Naive thymus-derived CD4-positive, alpha-beta T cell (primary cell): ENCODE measurements at regions of chr17 and their contacts with region 1.

Region 1: GRCh38 chr17:66673668-66674315 is 161.1 kb upstream of the CACNG5 start:
- DNase-seq: peak in 8 of 9 donors; percentile 32 to 87 (median 78)
- ATAC-seq: peak; percentile 92
- H3K4me3 ChIP-seq: no peak overlapping the region
- H3K4me3 Mint-ChIP-seq: peak overlapping the region; percentile 39 to 84 (median 74)
- H3K27ac ChIP-seq: peak overlapping the region; percentile 59
- H3K27ac Mint-ChIP-seq: peak overlapping the region; percentile 88 to 98 (median 92)
- H3K4me1 ChIP-seq: peaks cover 18 to 45% of the 10 kb centered on the region in 2 donors
- H3K4me1 Mint-ChIP-seq: peaks cover 38 to 79% (median 64%) of the 10 kb centered on the region in 7 donors
- H3K27me3 ChIP-seq: no peaks in the 10 kb centered on the region
- H3K27me3 Mint-ChIP-seq: no peaks in the 10 kb centered on the region

Region 2: DNA sequence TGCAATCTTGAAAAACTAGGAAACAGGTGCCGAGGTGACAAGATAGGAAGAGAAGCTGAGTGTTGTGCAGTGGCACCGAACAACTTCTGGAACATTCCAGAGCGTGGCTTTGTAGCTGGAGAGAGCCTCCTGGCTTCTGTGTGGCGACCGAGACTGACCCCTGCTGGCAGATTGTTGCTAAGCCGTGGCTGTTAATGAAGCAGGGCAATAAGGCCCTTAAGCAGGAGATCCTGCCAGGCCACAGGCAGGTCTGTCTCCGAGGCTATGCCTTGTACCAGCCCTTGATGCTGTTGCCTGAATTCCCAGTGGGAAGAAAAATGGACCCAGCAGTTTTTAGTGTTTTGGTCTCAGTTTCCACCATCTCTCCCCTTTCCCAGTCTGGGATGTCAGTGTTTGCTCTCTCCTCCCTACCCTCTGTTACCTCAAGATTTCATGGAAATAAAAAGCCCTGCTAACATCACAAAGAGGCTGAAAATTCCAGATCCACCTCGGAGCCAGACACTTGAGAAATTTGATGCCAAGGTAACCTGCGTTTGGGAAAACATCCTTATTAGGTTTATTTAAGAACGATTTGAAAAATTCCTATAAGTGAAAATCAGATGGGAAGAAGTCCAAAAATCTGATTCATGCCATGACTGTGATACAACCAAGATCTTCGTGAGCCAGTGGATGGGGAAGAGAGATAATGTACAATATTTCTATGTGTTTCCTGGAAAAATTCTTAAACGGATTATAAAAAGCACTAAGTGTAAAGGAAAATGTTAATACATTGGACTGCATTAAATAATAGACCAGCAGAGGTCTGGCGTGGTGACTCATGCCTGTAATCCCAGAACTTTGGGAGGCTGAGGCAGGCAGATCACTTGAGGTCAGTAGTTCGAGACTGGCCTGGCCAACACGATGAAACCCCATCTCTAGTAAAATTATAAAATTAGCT is 106.3 kb before region 1 on chr17:
- CTCF ChIA-PET with region 1: no interaction called
- POLR2A ChIA-PET with region 1: no interaction called
- intact Hi-C with region 1: loop called in 1 of 2 experiments (anchors 5 kb)
- DNase-seq: peak; percentile 30 to 76 (median 65)
- ATAC-seq: peak; percentile 87
- H3K4me3 ChIP-seq: no peak overlapping the region
- H3K4me3 Mint-ChIP-seq: no peak overlapping the region
- H3K27ac ChIP-seq: no peak overlapping the region
- H3K27ac Mint-ChIP-seq: peak overlapping the region in 7 of 9 donors; percentile 3 to 87 (median 23)
- H3K4me1 ChIP-seq: peaks cover 0 to 14% of the 10 kb centered on the region in 2 donors
- H3K4me1 Mint-ChIP-seq: peaks cover 17 to 56% (median 51%) of the 10 kb centered on the region in 7 donors
- H3K27me3 ChIP-seq: no peaks in the 10 kb centered on the region
- H3K27me3 Mint-ChIP-seq: no peaks in the 10 kb centered on the region

Region 3: DNA sequence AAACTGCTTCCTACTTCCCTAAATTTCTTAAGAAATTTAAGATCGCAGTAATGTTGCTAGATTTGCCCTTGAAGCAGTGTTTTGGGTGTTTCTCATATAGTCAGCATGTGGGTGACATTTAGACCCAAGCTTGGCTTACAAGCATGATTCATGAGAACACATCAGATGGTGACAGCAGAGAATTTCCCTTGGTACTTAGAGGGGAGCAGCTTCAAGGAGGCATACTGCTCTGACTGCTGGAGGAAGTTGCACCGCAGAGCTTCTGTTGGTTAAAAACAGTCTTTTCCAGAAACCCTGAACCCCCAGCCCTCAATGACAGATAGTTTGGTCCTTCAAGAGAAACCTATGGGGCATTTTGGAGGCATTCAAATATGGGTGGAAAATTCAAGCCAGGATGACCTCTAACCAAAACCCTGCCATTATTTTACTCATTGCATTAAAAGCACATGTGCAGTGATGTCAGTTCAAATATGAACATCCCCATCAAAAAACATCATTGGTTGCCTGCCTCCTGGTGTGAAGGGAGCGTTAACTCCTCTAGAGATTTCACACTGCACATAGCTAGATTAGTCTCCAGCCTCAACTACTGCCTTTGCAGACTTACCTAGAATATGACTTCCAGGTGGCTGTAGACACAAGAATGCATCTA is 40.4 kb before region 1 on chr17:
- CTCF ChIA-PET with region 1: interaction called, 3 read pairs
- POLR2A ChIA-PET with region 1: no interaction called
- intact Hi-C with region 1: loop called in 1 of 2 experiments (anchors 2 kb)
- DNase-seq: peak in 7 of 9 donors; percentile 10 to 51 (median 31)
- ATAC-seq: peak; percentile 81
- H3K4me3 ChIP-seq: no peak overlapping the region
- H3K4me3 Mint-ChIP-seq: peak overlapping the region in 6 of 10 donors; percentile 1 to 41 (median 24)
- H3K27ac ChIP-seq: no peak overlapping the region
- H3K27ac Mint-ChIP-seq: peak overlapping the region in 8 of 9 donors; percentile 3 to 84 (median 72)
- H3K4me1 ChIP-seq: peaks cover 0 to 11% of the 10 kb centered on the region in 2 donors
- H3K4me1 Mint-ChIP-seq: peaks cover 30 to 81% (median 70%) of the 10 kb centered on the region in 7 donors
- H3K27me3 ChIP-seq: no peaks in the 10 kb centered on the region
- H3K27me3 Mint-ChIP-seq: no peaks in the 10 kb centered on the region